Heart left ventricle (tissue), 16 donors: ENCODE measurements at regions of chr11 and their contacts with region 1.

Region 1: DNA sequence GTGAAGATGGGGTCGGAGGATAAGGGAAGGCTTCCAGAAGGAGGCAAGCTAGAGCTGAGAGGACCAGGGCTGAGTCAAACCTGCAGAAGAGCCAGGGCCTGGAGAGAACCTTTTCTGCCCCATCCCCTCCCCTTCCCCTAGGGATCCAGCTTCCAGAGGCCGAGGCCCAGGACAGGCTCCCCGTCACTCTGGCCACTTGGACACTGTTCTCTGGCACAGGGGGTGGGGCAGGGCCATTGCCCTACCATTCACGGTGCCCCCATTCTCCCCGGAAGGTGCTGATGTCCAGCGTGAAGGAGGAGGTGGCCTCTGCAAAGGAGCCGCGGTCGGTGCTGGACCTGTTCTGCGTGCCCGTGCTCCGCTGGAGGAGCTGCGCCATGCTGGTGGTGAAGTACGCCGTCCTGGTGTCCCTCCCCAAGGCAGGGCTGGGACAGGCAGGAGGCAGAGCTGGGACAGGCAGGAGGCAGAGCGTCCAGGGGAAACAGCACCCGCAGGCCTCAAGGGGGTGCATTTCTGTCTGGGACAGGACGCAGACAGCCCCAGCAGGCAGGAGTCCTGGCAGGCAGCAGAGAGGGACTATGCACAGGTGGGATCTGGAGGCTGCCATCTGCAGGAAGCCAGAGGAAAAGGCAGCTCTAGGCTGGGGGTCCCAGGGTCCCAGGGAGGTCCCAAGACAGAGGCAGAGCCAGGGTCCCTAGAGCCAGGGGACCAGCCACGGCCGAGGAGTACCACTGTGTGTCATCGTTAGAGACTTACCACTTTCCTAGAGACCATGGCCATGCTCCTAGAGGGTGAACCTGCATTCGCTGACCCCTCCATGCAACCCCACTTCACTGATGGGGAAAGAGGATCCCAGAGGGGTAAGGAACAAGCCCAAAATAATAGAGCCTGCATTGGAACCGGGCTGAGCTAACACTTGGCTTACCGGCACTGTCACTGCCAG is 25.8 kb upstream of the SLC22A12 start:
- DNase-seq: no peak
- ATAC-seq: no peak
- H3K4me3 ChIP-seq: no peak overlapping the region
- H3K27ac ChIP-seq: no peak overlapping the region
- H3K4me1 ChIP-seq: peaks cover 0 to 14% (median 0%) of the 10 kb centered on the region in 12 donors
- H3K27me3 ChIP-seq: peaks cover 0 to 2% (median 0%) of the 10 kb centered on the region in 9 donors
- CTCF ChIP-seq: no peak
- POLR2A ChIP-seq: no peak

Region 2: DNA sequence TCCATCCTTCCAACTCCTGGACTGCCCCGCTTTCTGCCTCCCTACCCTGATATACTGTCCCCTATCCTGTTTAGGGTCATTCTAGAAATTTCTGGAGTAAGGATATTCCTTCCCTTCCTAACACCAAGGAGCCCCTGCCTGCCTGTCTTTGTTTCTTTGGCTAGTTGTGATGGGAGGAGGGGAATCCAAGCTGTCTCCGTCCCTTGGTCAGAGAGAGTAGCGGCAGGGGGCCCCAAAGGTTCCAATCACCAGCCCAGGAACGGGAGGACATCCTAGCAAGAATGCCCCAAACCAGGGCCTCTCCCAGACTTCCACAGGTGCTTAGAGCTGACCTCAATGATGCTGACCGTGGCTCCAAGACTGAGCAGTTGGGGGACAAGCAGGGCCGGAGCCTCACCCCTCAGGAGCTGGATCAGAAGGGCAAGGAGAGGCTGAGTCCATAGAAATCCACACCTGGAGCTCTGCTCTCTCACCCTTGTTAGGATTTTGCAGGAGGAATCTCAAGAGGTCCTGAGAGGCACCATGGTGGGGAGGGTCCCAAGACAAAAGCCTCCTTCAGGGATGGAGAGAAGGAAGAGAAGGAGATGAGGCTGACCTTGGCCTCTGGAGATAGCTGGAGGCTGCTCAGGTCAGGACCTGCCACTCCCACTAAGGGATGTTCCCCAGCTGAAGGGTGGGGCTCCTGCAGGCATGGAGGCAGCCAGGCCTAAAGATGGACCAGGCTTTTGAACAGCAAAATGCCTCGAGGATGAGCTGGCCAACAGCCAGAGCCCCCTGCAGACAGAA is 39.4 kb after region 1 on chr11:
- intact Hi-C with region 1: loop called in 1 of 10 experiments (anchors 5 kb)
- DNase-seq: peak in 1 of 5 donors; percentile 36
- ATAC-seq: no peak
- H3K4me3 ChIP-seq: no peak overlapping the region
- H3K27ac ChIP-seq: no peak overlapping the region
- H3K4me1 ChIP-seq: peaks cover 0 to 10% (median 0%) of the 10 kb centered on the region in 12 donors
- H3K27me3 ChIP-seq: peaks cover 0 to 22% (median 7%) of the 10 kb centered on the region in 9 donors
- CTCF ChIP-seq: no peak
- POLR2A ChIP-seq: no peak